Endothelial cell of umbilical vein (primary cell): ENCODE measurements at regions of chr9 and their contacts with region 1.

Region 1: DNA sequence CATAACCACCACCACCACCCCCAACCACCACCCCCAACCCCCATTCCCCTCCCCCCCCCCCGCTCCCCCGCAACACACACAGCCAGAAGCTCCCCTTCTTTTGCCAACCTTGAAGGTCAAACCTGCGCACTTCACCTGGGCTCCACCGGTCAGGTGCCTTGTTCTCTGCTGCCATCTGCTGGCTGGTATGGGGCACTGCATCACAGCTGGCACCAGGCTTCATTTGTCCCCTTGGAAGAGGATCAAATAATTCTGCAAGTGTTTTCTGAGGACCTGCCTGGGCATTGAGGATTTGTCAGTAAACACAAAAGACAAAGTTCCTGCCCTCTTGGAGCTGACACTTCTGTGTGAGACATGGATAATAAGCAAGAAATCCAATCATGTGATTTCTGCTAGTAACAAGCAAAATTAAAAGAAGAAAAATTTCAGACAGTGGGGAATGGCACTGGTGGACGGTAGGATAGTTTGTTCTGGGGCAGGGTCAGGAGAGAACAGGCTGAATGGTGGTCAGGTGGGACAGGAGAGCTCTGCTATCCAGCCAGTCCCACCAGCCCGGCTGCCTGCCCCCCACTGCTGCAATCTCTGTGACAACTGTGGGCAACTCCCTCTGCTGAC is 55.6 kb upstream of the LMX1B start:
- DNase-seq: peak; percentile 46
- H3K4me3 ChIP-seq: no peak overlapping the region
- H3K27ac ChIP-seq: no peak overlapping the region
- H3K4me1 ChIP-seq: no peaks in the 10 kb centered on the region
- H3K27me3 ChIP-seq: peaks cover 5 to 14% of the 10 kb centered on the region in 2 experiments
- CTCF ChIP-seq: peak; percentile 91 to 95
- POLR2A ChIP-seq: no peak

Region 2: GRCh38 chr9:126514047-126514821 is 43.9 kb before region 1 on chr9:
- CTCF ChIA-PET with region 1: interaction called, 8 read pairs
- POLR2A ChIA-PET with region 1: no interaction called
- dilution Hi-C with region 1: no loop called
- intact Hi-C with region 1: loop called (anchors 1 kb)
- DNase-seq: peak; percentile 53
- H3K4me3 ChIP-seq: no peak overlapping the region
- H3K27ac ChIP-seq: no peak overlapping the region
- H3K4me1 ChIP-seq: peaks cover 5% of the 10 kb centered on the region
- H3K27me3 ChIP-seq: peaks cover 16 to 25% of the 10 kb centered on the region in 2 experiments
- CTCF ChIP-seq: peak; percentile 42 to 64
- POLR2A ChIP-seq: no peak

Region 3: DNA sequence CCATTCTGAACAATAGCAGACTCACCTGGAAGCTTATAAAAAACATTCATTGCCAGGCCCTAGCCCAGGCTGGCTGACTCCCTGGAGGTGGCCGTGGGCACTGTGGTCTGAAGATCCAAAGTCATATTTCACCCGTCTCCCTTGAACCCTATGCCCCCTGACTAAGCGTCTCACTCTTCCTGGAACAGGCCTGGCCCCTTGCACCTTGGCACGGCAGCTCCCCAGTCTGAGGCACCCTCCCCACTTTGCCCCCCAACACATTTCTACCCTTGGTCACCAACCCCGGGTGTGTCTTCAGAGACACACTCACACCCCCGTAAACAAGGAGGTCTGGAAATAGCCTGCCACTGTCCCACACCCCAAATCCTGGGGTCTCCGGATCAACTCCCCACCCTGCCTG is 13.1 kb before region 1 on chr9:
- CTCF ChIA-PET with region 1: interaction called, 13 read pairs
- POLR2A ChIA-PET with region 1: no interaction called
- dilution Hi-C with region 1: no loop called
- intact Hi-C with region 1: no loop called
- DNase-seq: no peak
- H3K4me3 ChIP-seq: no peak overlapping the region
- H3K27ac ChIP-seq: no peak overlapping the region
- H3K4me1 ChIP-seq: no peaks in the 10 kb centered on the region
- H3K27me3 ChIP-seq: no peaks in the 10 kb centered on the region
- CTCF ChIP-seq: no peak
- POLR2A ChIP-seq: no peak